GM12878 (cell line): ENCODE measurements at regions of chr2 and their contacts with region 1.

Region 1: GRCh38 chr2:57497489-57498096 is 549.0 kb upstream of the VRK2 start:
- DNase-seq: peak; percentile 4
- ATAC-seq: peak; percentile 92
- H3K4me3 ChIP-seq: no peak overlapping the region
- H3K27ac ChIP-seq: no peak overlapping the region
- H3K4me1 ChIP-seq: no peaks in the 10 kb centered on the region
- H3K27me3 ChIP-seq: no peaks in the 10 kb centered on the region
- CTCF ChIP-seq: peak; percentile 72 to 80 (median 76)
- EP300 ChIP-seq: no peak
- POLR2A ChIP-seq: no peak
- RAD21 ChIP-seq: peak; percentile 90

Region 2: GRCh38 chr2:57209799-57210198 is 287.8 kb before region 1 on chr2:
- CTCF ChIA-PET with region 1: no interaction called
- POLR2A ChIA-PET with region 1: no interaction called
- RAD21 ChIA-PET with region 1: no interaction called
- SMC1A ChIA-PET with region 1: no interaction called
- in situ Hi-C with region 1: no loop called
- intact Hi-C with region 1: no loop called
- DNase-seq: no peak
- ATAC-seq: no peak
- H3K4me3 ChIP-seq: no peak overlapping the region
- H3K27ac ChIP-seq: no peak overlapping the region
- H3K4me1 ChIP-seq: no peaks in the 10 kb centered on the region
- H3K27me3 ChIP-seq: no peaks in the 10 kb centered on the region
- CTCF ChIP-seq: no peak
- EP300 ChIP-seq: no peak
- POLR2A ChIP-seq: no peak
- RAD21 ChIP-seq: no peak

Region 3: GRCh38 chr2:57296795-57297517 is 200.6 kb before region 1 on chr2:
- CTCF ChIA-PET with region 1: no interaction called
- POLR2A ChIA-PET with region 1: no interaction called
- RAD21 ChIA-PET with region 1: no interaction called
- SMC1A ChIA-PET with region 1: no interaction called
- in situ Hi-C with region 1: no loop called
- intact Hi-C with region 1: no loop called
- DNase-seq: no peak
- ATAC-seq: no peak
- H3K4me3 ChIP-seq: no peak overlapping the region
- H3K27ac ChIP-seq: no peak overlapping the region
- H3K4me1 ChIP-seq: no peaks in the 10 kb centered on the region
- H3K27me3 ChIP-seq: no peaks in the 10 kb centered on the region
- CTCF ChIP-seq: no peak
- EP300 ChIP-seq: no peak
- POLR2A ChIP-seq: no peak
- RAD21 ChIP-seq: no peak

Region 4: GRCh38 chr2:57376985-57377384 is 120.6 kb before region 1 on chr2:
- CTCF ChIA-PET with region 1: interaction called, 10 read pairs
- POLR2A ChIA-PET with region 1: no interaction called
- RAD21 ChIA-PET with region 1: no interaction called
- SMC1A ChIA-PET with region 1: interaction called, 4 read pairs
- in situ Hi-C with region 1: no loop called
- intact Hi-C with region 1: loop called (anchors 5 kb)
- DNase-seq: no peak
- ATAC-seq: peak; percentile 42; the same call in 1 of the 3 replicates
- H3K4me3 ChIP-seq: no peak overlapping the region
- H3K27ac ChIP-seq: no peak overlapping the region
- H3K4me1 ChIP-seq: no peaks in the 10 kb centered on the region
- H3K27me3 ChIP-seq: no peaks in the 10 kb centered on the region
- CTCF ChIP-seq: peak in 2 of 3 experiments; percentile 7 to 19; a peak in 1 of 6 replicates
- EP300 ChIP-seq: no peak
- POLR2A ChIP-seq: no peak
- RAD21 ChIP-seq: peak; percentile 63; the same call in 1 of the 2 replicates

Region 5: DNA sequence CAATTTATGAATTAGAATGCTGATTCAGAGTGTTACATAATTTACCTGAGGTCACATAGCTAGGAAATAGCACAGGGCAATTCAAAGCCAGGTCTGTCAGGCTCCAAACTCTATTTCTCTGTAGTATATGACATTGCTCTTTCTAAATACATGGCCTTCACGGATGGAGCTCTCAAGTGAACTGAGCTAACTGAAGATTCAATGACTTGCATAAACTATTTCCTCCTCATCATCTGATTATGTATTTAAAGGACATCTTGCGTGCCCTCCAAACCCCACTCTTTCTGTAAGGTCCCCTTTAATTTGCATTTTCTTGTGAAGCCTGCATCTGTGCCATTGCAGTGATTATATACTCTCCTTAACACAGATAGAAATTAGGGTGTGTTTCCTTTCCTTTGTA is 11.6 kb after region 1 on chr2:
- CTCF ChIA-PET with region 1: interaction called, 17 read pairs
- POLR2A ChIA-PET with region 1: no interaction called
- RAD21 ChIA-PET with region 1: no interaction called
- SMC1A ChIA-PET with region 1: interaction called, 3 read pairs
- in situ Hi-C with region 1: no loop called
- intact Hi-C with region 1: no loop called
- DNase-seq: no peak
- ATAC-seq: no peak
- H3K4me3 ChIP-seq: no peak overlapping the region
- H3K27ac ChIP-seq: no peak overlapping the region
- H3K4me1 ChIP-seq: no peaks in the 10 kb centered on the region
- H3K27me3 ChIP-seq: no peaks in the 10 kb centered on the region
- CTCF ChIP-seq: no peak
- EP300 ChIP-seq: no peak
- POLR2A ChIP-seq: no peak
- RAD21 ChIP-seq: no peak

Region 6: DNA sequence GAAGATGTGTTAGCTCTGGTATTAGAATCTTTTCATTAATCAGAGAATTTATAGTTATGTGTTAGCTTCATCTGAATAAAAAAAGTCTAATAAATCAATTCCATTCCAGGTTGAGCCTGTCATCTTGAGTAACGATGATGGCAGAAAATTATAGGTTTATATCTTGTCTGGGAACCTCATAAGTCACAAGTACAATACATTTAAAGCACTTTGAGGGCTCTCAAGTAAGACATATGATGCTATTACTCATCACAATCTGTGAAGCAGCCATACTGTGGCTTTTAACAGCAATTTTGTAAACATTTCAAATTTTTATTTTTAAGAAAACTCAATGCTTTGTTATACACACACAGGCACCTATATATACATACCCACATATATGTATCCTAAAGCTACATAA is 64.9 kb after region 1 on chr2:
- CTCF ChIA-PET with region 1: no interaction called
- POLR2A ChIA-PET with region 1: no interaction called
- RAD21 ChIA-PET with region 1: no interaction called
- SMC1A ChIA-PET with region 1: no interaction called
- in situ Hi-C with region 1: no loop called
- intact Hi-C with region 1: no loop called
- DNase-seq: no peak
- ATAC-seq: no peak
- H3K4me3 ChIP-seq: no peak overlapping the region
- H3K27ac ChIP-seq: no peak overlapping the region
- H3K4me1 ChIP-seq: no peaks in the 10 kb centered on the region
- H3K27me3 ChIP-seq: no peaks in the 10 kb centered on the region
- CTCF ChIP-seq: no peak
- EP300 ChIP-seq: no peak
- POLR2A ChIP-seq: no peak
- RAD21 ChIP-seq: no peak